PC-3 (cell line): ENCODE measurements at regions of chr3 and their contacts with region 1.

Region 1: DNA sequence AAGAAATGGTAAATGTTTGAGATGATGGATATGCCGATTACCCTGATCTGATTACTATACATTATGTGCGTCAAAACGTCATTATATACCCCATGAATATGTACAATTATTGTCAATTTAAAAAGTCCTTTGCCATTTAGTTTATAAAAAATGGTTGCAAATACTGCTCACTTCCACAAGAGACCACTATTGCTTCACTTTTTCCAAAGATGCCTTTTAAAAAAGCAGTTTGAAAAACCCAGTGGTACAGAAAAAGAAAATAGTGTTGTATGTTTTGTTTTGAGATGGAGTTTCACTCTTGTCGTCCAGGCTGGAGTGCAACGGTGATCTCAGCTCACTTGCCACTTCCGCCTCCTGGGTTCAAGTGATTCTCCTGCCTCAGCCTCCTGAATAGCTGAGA is 39.3 kb downstream of the EDEM1 start:
- DNase-seq: peak; percentile 64
- ATAC-seq: peak; percentile 8; the same call in 1 of the 2 replicates
- H3K4me3 ChIP-seq: no peak overlapping the region
- H3K27ac ChIP-seq: no peak overlapping the region
- H3K4me1 ChIP-seq: 0 out of 2 replicates have a peak, but pooled peaks cover 3% of the 10 kb centered on the region
- H3K27me3 ChIP-seq: no peaks in the 10 kb centered on the region
- CTCF ChIP-seq: peak; percentile 79

Region 2: GRCh38 chr3:4963669-4964589 is 262.9 kb before region 1 on chr3:
- CTCF ChIA-PET with region 1: no interaction called
- POLR2A ChIA-PET with region 1: no interaction called
- intact Hi-C with region 1: no loop called
- DNase-seq: no peak
- ATAC-seq: peak; percentile 87
- H3K4me3 ChIP-seq: no peak overlapping the region
- H3K27ac ChIP-seq: no peak overlapping the region
- H3K4me1 ChIP-seq: 0 out of 2 replicates have a peak, but pooled peaks cover 6% of the 10 kb centered on the region
- H3K27me3 ChIP-seq: no peaks in the 10 kb centered on the region
- CTCF ChIP-seq: no peak

Region 3: DNA sequence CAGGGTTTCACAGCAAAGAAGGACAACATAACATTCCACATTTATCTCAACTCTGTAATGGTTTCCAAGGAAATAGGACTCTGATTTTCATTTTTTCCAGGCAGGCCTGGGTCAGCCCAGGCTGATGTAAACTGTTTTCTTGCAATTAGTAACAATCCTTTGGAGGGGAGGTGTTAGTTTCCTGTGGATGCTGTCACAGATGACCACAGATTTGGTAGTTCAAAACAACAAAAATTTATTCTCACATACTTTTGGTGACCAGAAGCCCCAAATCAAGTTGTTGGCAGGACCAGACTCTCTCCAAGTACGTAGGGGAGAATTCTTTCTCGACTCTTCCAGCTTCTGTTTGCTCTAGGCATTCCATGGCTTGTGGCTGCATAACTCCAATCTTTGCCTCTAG is 48.7 kb after region 1 on chr3:
- CTCF ChIA-PET with region 1: no interaction called
- POLR2A ChIA-PET with region 1: no interaction called
- intact Hi-C with region 1: no loop called
- DNase-seq: peak; percentile 15
- ATAC-seq: no peak
- H3K4me3 ChIP-seq: no peak overlapping the region
- H3K27ac ChIP-seq: no peak overlapping the region
- H3K4me1 ChIP-seq: no peaks in the 10 kb centered on the region
- H3K27me3 ChIP-seq: no peaks in the 10 kb centered on the region
- CTCF ChIP-seq: no peak

Region 4: GRCh38 chr3:5304789-5305683 is 78.3 kb after region 1 on chr3:
- CTCF ChIA-PET with region 1: no interaction called
- POLR2A ChIA-PET with region 1: no interaction called
- intact Hi-C with region 1: loop called (anchors 2 kb)
- DNase-seq: peak; percentile 84
- ATAC-seq: peak; percentile 85
- H3K4me3 ChIP-seq: no peak overlapping the region
- H3K27ac ChIP-seq: no peak overlapping the region
- H3K4me1 ChIP-seq: peaks cover 12% of the 10 kb centered on the region; the same call in 1 of the 2 replicates
- H3K27me3 ChIP-seq: no peaks in the 10 kb centered on the region
- CTCF ChIP-seq: peak; percentile 94

Region 5: DNA sequence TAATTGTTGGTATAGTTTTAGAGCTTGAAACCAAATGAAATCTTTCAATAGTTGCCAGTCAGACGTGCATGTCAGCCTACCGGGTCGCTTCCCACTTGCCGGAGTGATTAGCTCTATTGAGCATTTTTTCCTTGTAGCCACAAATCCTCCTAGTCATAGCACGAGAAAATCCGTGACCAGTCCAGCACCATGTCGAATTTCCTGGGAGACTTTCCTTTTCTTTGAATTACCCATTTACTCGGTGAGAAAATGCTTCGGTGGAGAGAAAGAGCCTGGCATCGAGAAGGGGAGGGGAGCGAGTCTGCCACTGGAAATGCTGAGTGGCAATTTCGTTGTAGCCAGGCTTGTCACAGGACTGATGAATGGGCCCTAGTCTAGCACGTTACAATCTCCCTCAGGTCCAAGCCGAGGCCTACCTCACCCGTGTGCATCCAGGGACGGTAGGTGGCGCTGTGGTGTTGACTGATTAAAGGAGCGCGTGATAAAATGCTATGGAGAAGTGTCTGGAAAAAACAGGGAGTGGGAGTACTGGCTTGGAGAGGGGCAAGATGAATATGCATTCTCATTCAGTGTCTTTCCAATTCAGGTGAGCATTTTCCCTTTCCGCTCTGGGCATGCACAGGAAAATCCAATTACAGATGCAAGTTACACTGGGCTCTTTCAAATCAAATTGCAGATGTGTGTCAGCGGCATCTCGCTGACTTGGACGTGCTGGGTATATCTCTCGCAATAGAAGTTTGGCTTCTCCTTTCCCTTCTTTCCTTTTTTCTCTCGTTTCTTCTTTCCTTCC is 199.5 kb after region 1 on chr3:
- CTCF ChIA-PET with region 1: no interaction called
- POLR2A ChIA-PET with region 1: no interaction called
- intact Hi-C with region 1: loop called (anchors 10 kb)
- DNase-seq: peak; percentile 92
- ATAC-seq: peak; percentile 99
- H3K4me3 ChIP-seq: no peak overlapping the region
- H3K27ac ChIP-seq: no peak overlapping the region
- H3K4me1 ChIP-seq: no peaks in the 10 kb centered on the region
- H3K27me3 ChIP-seq: no peaks in the 10 kb centered on the region
- CTCF ChIP-seq: peak; percentile 95

Region 6: GRCh38 chr3:6807967-6808588 is 1581.3 kb after region 1 on chr3:
- CTCF ChIA-PET with region 1: no interaction called
- POLR2A ChIA-PET with region 1: no interaction called
- intact Hi-C with region 1: loop called (anchors 10 kb)
- DNase-seq: peak; percentile 78
- ATAC-seq: no peak
- H3K4me3 ChIP-seq: no peak overlapping the region
- H3K27ac ChIP-seq: peak overlapping the region; percentile 89
- H3K4me1 ChIP-seq: peaks cover 26% of the 10 kb centered on the region
- H3K27me3 ChIP-seq: no peaks in the 10 kb centered on the region
- CTCF ChIP-seq: no peak